ENCODE measurements at regions of chr12 and their contacts with region 1.

Region 1: DNA sequence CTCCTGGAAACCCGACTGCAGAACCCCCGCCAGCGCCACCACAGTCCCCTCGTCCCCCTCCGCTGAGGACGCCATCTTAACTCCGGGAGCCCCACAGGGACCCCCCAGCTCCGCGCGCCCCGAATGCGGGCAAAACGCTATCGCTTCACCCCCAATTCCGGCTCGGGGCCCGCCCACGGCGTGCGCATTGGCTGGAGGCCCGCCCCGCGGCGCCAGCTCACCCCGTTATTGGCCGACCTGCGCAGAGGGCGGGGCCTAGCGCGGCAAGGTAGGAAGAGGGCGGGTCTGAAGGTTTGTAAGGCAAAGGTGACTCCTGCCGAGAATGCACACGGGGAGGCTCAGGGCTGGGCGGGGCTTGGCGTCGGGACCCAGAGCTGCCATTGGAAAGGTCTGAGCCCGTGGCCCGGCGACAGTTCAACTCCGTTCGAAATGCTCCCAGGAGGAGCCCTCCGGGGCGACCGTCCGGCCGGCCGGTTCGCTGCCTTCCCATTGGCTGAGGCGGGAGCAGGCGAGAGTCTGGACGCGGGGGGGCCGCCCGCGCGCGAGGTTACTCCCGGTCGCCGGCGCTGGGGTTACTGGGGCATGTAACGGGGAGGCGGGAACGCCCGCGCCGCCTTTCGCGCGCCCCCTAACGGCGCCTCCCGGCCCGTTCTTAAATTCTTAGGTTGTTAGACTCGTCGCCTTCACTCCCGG is at the start of gene LPCAT3:
- DNase-seq: peak; percentile 99
- H3K4me3 ChIP-seq: peak within 1 kb of the TSS; percentile 56 to 87 (median 77)
- H3K27ac ChIP-seq: peak within 1 kb of the TSS; percentile 87 to 98 (median 92)
- H3K4me1 ChIP-seq: peaks cover 12 to 44% (median 27%) of the 10 kb centered on the region in 6 donors
- H3K27me3 ChIP-seq: no peaks in the 10 kb centered on the region
- CTCF ChIP-seq: peak; percentile 64 to 95 (median 87)
- POLR2A ChIP-seq: peak in 2 of 3 donors; percentile 30 to 78
- total RNA-seq, gene LPCAT3: 28.8 to 52.5 (median 40.8) TPM

Region 2: DNA sequence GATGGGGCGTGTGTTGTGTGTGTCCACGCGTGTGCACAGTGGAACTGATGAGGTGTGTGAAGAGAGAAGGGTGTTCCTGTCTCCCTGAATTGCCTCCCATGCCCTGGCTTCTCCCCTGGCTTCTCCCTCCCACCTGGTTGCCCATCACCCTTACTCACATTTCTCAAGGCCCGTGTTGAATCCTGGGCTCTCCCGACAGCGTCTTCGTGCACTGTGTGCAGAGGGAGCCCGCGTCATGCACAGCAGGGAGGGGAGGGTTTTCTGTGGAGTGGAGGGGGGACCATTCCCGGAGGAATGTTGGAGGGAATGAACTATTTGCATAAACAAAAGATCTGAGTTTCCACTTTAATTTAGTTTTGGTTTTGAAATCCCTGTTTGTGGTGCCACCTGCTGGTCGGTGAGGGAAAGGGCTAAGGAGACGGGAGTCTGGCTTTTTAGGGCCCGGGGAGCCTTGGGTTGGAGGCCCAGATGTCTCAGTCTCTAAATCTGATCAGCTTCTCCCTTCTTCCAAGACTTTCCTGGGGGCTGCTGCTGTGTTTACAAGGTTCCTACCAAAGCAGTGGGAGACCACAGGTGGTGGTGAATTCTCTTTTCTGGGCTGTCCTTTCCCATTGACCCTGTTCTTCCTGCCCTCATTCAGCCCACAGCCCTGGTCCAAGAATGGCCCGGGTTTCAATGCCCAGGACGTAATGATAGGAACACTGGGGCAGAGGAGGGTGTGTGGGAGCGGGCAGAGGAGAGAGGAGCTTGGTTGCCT is 73.9 kb after region 1 on chr12 and contains the start of gene C1R:
- intact Hi-C with region 1: loop called (anchors 10 kb)
- DNase-seq: peak; percentile 86
- H3K4me3 ChIP-seq: peak within 1 kb of the TSS; percentile 36 to 71 (median 49)
- H3K27ac ChIP-seq: peak within 1 kb of the TSS; percentile 27 to 82 (median 76)
- H3K4me1 ChIP-seq: peaks cover 0 to 58% (median 25%) of the 10 kb centered on the region in 6 donors
- H3K27me3 ChIP-seq: no peaks in the 10 kb centered on the region
- CTCF ChIP-seq: peak; percentile 79 to 96 (median 93)
- POLR2A ChIP-seq: no peak
- total RNA-seq, gene C1R: 188 to 421 (median 289) TPM

Measured in spleen (tissue), 13 donors.